HCT116 (cell line): ENCODE measurements at regions of chr6 and their contacts with region 1.

Region 1: GRCh38 chr6:89819336-89820130 is at the start of gene MDN1:
- DNase-seq: peak; percentile 88
- ATAC-seq: peak; percentile 96
- H3K4me3 ChIP-seq: peak within 1 kb of the TSS; percentile 88 to 97
- H3K27ac ChIP-seq: peak within 1 kb of the TSS; percentile 85
- H3K4me1 ChIP-seq: peaks cover 5 to 25% of the 10 kb centered on the region in 2 experiments; a peak in 3 of 4 replicates
- H3K27me3 ChIP-seq: no peaks in the 10 kb centered on the region
- CTCF ChIP-seq: no peak
- POLR2A ChIP-seq: peak; percentile 81
- RAD21 ChIP-seq: no peak
- total RNA-seq, gene MDN1: 53.6 TPM

Region 2: DNA sequence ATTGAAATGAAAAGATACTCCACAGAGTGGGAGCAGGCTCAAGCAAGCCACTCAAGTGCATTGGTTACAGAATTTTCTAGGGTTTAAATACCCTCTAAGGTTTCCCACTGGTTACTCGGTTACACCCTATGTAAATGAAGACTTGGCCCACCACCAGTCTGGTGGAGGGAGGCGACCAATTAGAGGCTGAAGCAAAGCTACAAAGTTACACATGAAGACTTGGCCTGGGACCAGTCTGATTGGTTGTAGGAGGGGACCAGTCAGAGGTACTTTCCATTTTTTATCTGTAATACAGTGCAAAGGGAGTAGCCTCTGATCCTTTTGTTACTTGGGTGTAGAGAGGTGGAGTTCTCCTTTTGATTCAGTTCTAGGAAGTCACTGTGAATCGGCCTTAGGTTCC is 709.2 kb before region 1 on chr6:
- CTCF ChIA-PET with region 1: no interaction called
- POLR2A ChIA-PET with region 1: no interaction called
- RAD21 ChIA-PET with region 1: no interaction called
- intact Hi-C with region 1: no loop called
- DNase-seq: no peak
- ATAC-seq: no peak
- H3K4me3 ChIP-seq: no peak overlapping the region
- H3K27ac ChIP-seq: no peak overlapping the region
- H3K4me1 ChIP-seq: peaks cover 0 to 12% of the 10 kb centered on the region in 2 experiments; a peak in 3 of 4 replicates
- H3K27me3 ChIP-seq: no peaks in the 10 kb centered on the region
- CTCF ChIP-seq: no peak
- POLR2A ChIP-seq: no peak
- RAD21 ChIP-seq: no peak

Region 3: GRCh38 chr6:89829591-89830385 is 10.3 kb after region 1 on chr6 and contains the start of gene CASP8AP2:
- CTCF ChIA-PET with region 1: interaction called, 5 read pairs
- POLR2A ChIA-PET with region 1: interaction called, 13 read pairs
- RAD21 ChIA-PET with region 1: no interaction called
- intact Hi-C with region 1: no loop called
- DNase-seq: peak; percentile 99
- ATAC-seq: peak; percentile 96
- H3K4me3 ChIP-seq: peak within 1 kb of the TSS; percentile 78 to 84
- H3K27ac ChIP-seq: peak within 1 kb of the TSS; percentile 69
- H3K4me1 ChIP-seq: peaks cover 6 to 15% of the 10 kb centered on the region in 2 experiments; a peak in 3 of 4 replicates
- H3K27me3 ChIP-seq: no peaks in the 10 kb centered on the region
- CTCF ChIP-seq: no peak
- POLR2A ChIP-seq: peak; percentile 81
- RAD21 ChIP-seq: no peak
- total RNA-seq, gene CASP8AP2: 18.6 TPM